ENCODE measurements at regions of chr5 and their contacts with region 1.

Region 1: GRCh38 chr5:73451224-73452130 is 2.9 kb upstream of the FOXD1 start:
- DNase-seq: peak; percentile 64
- CTCF ChIP-seq: peak; percentile 64

Region 2: DNA sequence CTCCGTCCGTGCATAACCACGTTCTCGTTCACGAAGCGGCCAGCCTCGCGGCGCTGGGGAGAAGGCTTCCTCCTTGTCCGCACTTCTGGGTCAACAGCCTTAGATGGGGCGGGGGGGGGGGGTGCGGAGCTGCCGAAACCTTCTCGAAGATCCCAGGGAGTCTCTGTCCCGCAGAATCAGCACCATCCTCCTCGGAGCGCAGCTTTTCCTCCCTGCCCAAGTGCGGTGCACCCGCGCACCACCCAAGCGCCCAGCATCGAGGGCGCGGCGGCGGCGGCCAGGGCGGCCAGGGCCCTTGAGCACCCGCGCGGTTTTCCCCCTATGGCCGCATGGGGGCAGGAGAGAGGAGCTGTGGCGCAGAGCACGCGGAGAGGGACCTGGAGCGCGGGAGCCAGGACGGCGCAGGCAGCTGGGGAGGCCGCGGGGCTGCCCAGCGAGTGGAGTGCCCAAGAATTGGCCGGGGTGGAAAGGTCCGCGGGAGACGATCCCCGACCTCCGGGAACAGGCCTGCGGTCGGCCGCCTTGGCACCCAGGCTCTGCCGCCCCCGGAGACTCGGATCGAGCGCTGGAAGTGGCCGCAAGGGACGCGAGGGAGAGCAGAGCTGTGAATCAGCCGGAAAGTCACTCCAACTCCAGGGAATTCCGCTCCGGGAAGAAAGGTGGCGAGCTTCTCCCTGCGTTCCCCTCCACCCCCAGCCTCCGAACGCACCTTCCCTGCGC is 235.4 kb before region 1 on chr5:
- CTCF ChIA-PET with region 1: interaction called, 16 read pairs
- POLR2A ChIA-PET with region 1: no interaction called
- DNase-seq: peak; percentile 84
- CTCF ChIP-seq: peak; percentile 67

Region 3: GRCh38 chr5:73638344-73639095 is 187.0 kb after region 1 on chr5:
- CTCF ChIA-PET with region 1: no interaction called
- POLR2A ChIA-PET with region 1: no interaction called
- DNase-seq: no peak
- CTCF ChIP-seq: no peak

Measured in GM10248 (cell line).